Naive thymus-derived CD8-positive, alpha-beta T cell (primary cell): ENCODE measurements at regions of chr14 and their contacts with region 1.

Region 1: GRCh38 chr14:67695394-67695949 is at the start of gene RDH11:
- DNase-seq: peak; percentile 60 to 91 (median 80)
- ATAC-seq: peak; percentile 95 to 96
- H3K4me3 Mint-ChIP-seq: peak within 1 kb of the TSS; percentile 84 to 96 (median 91)
- H3K27ac Mint-ChIP-seq: peak within 1 kb of the TSS; percentile 61 to 93 (median 90)
- H3K4me1 Mint-ChIP-seq: peaks cover 18 to 25% (median 22%) of the 10 kb centered on the region in 4 donors
- H3K27me3 Mint-ChIP-seq: no peaks in the 10 kb centered on the region
- polyA plus RNA-seq, gene RDH11: 74.7 to 87.6 (median 79.3) TPM

Region 2: GRCh38 chr14:67457782-67458181 is 237.7 kb before region 1 on chr14:
- POLR2A ChIA-PET with region 1: no interaction called
- DNase-seq: no peak
- ATAC-seq: no peak
- H3K4me3 Mint-ChIP-seq: no peak overlapping the region
- H3K27ac Mint-ChIP-seq: peak overlapping the region in 2 of 10 donors; percentile 10 to 60
- H3K4me1 Mint-ChIP-seq: peaks cover 0 to 3% (median 1%) of the 10 kb centered on the region in 4 donors
- H3K27me3 Mint-ChIP-seq: peaks cover 0 to 1% (median 0%) of the 10 kb centered on the region in 5 donors

Region 3: DNA sequence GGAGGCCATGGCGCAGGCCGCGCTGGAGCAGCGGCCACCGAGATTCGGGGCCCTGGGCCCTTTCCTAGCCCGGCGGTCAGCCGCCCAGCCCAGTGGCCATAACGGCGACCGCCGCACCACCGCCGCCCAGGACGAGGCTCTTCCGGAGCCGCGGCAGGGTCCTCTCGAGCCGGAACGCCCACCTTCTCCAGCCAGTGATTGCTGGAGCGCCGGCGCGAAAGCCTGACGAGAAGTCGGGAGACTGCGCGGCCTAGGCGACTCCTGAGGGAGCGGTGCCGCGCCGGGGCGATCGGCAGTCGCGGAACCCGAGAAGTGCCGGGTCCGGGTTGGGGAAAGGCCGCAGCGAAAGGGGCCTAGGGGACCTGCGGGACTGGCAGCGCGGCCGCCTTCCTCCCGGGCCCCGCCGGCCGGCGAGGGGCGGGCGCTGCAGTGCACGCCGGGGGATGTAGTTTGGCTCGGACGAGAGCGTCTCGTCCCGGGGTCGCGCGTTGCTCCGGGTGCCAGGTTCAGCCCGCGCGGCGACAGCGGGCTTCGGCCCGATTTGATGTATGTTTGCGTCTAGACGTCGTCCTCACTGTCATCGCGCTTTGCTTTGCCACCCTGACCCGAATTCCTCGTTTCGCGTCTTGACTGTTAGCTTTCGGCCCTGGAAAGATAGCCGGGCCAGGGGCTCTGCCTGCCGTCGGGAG is 20.8 kb before region 1 on chr14 and contains the start of gene VTI1B:
- POLR2A ChIA-PET with region 1: interaction called, 11 read pairs
- DNase-seq: peak; percentile 69 to 92 (median 80)
- ATAC-seq: peak; percentile 91 to 92
- H3K4me3 Mint-ChIP-seq: peak within 1 kb of the TSS; percentile 87 to 96 (median 91)
- H3K27ac Mint-ChIP-seq: peak within 1 kb of the TSS; percentile 92 to 96 (median 93)
- H3K4me1 Mint-ChIP-seq: peaks cover 16 to 50% (median 41%) of the 10 kb centered on the region in 4 donors
- H3K27me3 Mint-ChIP-seq: no peaks in the 10 kb centered on the region
- polyA plus RNA-seq, gene VTI1B: 64.4 to 87.9 (median 83.1) TPM